CD8-positive, alpha-beta T cell (primary cell): ENCODE measurements at regions of chr9 and their contacts with region 1.

Region 1: GRCh38 chr9:8070779-8071444 is 271.3 kb upstream of the DMAC1 start:
- DNase-seq: no peak
- ATAC-seq: no peak
- H3K4me3 ChIP-seq: no peak overlapping the region
- H3K4me3 Mint-ChIP-seq: no peak overlapping the region
- H3K27ac ChIP-seq: no peak overlapping the region
- H3K27ac Mint-ChIP-seq: no peak overlapping the region
- H3K4me1 ChIP-seq: no peaks in the 10 kb centered on the region
- H3K4me1 Mint-ChIP-seq: no peaks in the 10 kb centered on the region
- H3K27me3 ChIP-seq: no peaks in the 10 kb centered on the region
- H3K27me3 Mint-ChIP-seq: no peaks in the 10 kb centered on the region
- CTCF ChIP-seq: no peak

Region 2: GRCh38 chr9:8011974-8012373 is 58.9 kb before region 1 on chr9:
- CTCF ChIA-PET with region 1: no interaction called
- POLR2A ChIA-PET with region 1: no interaction called
- intact Hi-C with region 1: loop called in 1 of 2 experiments (anchors 10 kb)
- DNase-seq: no peak
- ATAC-seq: no peak
- H3K4me3 ChIP-seq: no peak overlapping the region
- H3K4me3 Mint-ChIP-seq: no peak overlapping the region
- H3K27ac ChIP-seq: no peak overlapping the region
- H3K27ac Mint-ChIP-seq: no peak overlapping the region
- H3K4me1 ChIP-seq: no peaks in the 10 kb centered on the region
- H3K4me1 Mint-ChIP-seq: no peaks in the 10 kb centered on the region
- H3K27me3 ChIP-seq: no peaks in the 10 kb centered on the region
- H3K27me3 Mint-ChIP-seq: no peaks in the 10 kb centered on the region
- CTCF ChIP-seq: no peak